Breast epithelium (tissue), 4 donors: ENCODE measurements at regions of chr3 and their contacts with region 1.

Region 1: DNA sequence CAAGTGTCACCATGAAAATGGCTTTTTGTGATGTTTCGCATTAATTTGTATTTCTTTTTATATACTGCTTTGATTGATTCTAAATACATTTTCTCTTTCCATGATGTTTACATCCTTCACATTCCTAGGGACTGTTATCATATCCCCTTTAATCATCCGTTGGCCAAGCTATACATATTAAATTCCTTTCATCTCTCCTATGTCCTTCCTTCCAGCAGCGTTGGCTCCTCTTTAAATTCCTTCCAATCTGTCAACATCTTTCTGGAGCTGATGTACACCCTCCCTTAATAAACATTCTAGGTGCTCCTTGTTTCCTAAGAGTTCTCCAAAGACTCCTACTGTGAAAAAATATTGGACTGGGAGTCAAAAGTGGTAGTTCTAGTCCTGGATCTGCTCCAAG is 87.8 kb downstream of the IGF2BP2 start:
- DNase-seq: no peak
- H3K4me3 ChIP-seq: no peak overlapping the region
- H3K27ac ChIP-seq: no peak overlapping the region
- H3K4me1 ChIP-seq: no peaks in the 10 kb centered on the region
- H3K27me3 ChIP-seq: no peaks in the 10 kb centered on the region
- CTCF ChIP-seq: no peak
- POLR2A ChIP-seq: no peak

Region 2: GRCh38 chr3:185677146-185677829 is 59.7 kb before region 1 on chr3:
- intact Hi-C with region 1: no loop called
- DNase-seq: no peak
- H3K4me3 ChIP-seq: no peak overlapping the region
- H3K27ac ChIP-seq: no peak overlapping the region
- H3K4me1 ChIP-seq: no peaks in the 10 kb centered on the region
- H3K27me3 ChIP-seq: no peaks in the 10 kb centered on the region
- CTCF ChIP-seq: peak in 2 of 3 donors; percentile 52 to 62
- POLR2A ChIP-seq: no peak

Region 3: DNA sequence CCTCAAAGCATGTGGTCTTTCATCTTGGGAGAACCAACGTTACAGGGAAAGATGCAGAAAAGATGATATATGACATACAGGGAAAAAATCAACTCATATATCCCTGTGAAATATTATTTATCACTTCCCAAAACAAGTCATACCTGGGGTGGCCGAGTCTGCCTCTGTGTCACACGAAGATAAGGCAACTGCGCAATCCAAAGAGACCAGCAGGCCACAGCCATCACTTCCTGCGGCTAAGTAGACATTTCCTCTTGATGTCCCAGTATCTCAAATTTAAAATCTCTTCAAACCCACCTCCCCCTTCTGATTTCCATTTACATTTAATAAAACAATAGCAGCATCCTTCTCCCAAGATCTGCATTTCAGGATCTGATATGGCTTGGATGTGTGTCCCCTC is 16.3 kb after region 1 on chr3:
- intact Hi-C with region 1: loop called (anchors 1 kb)
- DNase-seq: no peak
- H3K4me3 ChIP-seq: no peak overlapping the region
- H3K27ac ChIP-seq: no peak overlapping the region
- H3K4me1 ChIP-seq: no peaks in the 10 kb centered on the region
- H3K27me3 ChIP-seq: no peaks in the 10 kb centered on the region
- CTCF ChIP-seq: no peak
- POLR2A ChIP-seq: no peak

Region 4: GRCh38 chr3:186320862-186321568 is 584.0 kb after region 1 on chr3:
- intact Hi-C with region 1: loop called (anchors 5 kb)
- DNase-seq: no peak
- H3K4me3 ChIP-seq: no peak overlapping the region
- H3K27ac ChIP-seq: no peak overlapping the region
- H3K4me1 ChIP-seq: no peaks in the 10 kb centered on the region
- H3K27me3 ChIP-seq: no peaks in the 10 kb centered on the region
- CTCF ChIP-seq: no peak
- POLR2A ChIP-seq: no peak